ENCODE measurements at regions of chr5 and their contacts with region 1.

Region 1: GRCh38 chr5:133321833-133322420 is 270.1 kb downstream of the HSPA4 start:
- DNase-seq: peak; percentile 33
- H3K4me3 Mint-ChIP-seq: peak overlapping the region; percentile 36
- H3K27ac Mint-ChIP-seq: peak overlapping the region; percentile 67
- H3K4me1 Mint-ChIP-seq: peaks cover 21% of the 10 kb centered on the region
- H3K27me3 Mint-ChIP-seq: peaks cover 2% of the 10 kb centered on the region

Region 2: DNA sequence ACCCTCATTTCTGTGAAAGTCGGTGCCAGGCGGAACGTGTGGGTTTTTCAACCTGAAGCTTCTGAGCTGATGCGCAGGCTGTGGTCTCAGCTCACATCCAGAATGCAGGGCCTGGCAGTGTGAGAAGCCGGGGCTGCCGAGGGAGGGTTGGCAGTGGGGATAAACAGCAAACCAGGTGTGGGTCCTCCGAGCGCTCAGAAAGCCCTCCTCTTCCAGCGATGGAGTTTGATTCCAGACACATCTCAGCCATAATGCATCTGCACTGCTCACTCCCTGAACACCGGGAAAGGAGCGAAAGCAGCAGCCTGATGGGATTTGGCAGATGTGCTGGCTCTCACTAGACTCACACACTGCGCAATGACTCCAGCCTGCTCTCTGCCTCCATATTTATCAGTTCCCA is 10.0 kb after region 1 on chr5:
- intact Hi-C with region 1: loop called (anchors 1 kb)
- DNase-seq: no peak
- H3K4me3 Mint-ChIP-seq: no peak overlapping the region
- H3K27ac Mint-ChIP-seq: peak overlapping the region; percentile 74
- H3K4me1 Mint-ChIP-seq: peaks cover 38% of the 10 kb centered on the region
- H3K27me3 Mint-ChIP-seq: no peaks in the 10 kb centered on the region

Region 3: DNA sequence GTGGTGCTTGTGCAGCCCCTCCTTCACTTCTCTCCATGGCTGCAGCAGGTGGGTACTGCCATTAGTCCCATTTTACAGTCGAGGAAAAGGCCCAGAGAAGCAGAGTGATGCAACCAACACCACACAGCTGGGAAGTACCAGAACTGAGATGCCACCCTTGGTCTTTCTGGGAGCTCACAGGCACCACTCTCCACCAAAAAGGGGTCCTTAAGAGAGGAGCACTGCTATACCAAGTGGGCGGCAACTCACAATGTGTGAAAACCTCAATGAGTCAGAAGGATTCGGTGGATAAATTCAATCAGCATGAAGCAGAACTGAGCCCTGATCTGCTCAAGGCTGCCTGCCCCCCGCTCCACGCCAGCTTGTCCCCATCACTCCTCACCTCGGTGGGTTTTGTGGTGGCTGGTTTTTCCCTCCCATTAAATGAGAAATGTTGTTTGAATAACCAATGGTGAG is 76.7 kb after region 1 on chr5:
- intact Hi-C with region 1: loop called (anchors 5 kb)
- DNase-seq: no peak
- H3K4me3 Mint-ChIP-seq: peak overlapping the region; percentile 34
- H3K27ac Mint-ChIP-seq: no peak overlapping the region
- H3K4me1 Mint-ChIP-seq: peaks cover 35% of the 10 kb centered on the region
- H3K27me3 Mint-ChIP-seq: peaks cover 2% of the 10 kb centered on the region